Lower leg skin (tissue), 4 donors: ENCODE measurements at regions of chr7 and their contacts with region 1.

Region 1: DNA sequence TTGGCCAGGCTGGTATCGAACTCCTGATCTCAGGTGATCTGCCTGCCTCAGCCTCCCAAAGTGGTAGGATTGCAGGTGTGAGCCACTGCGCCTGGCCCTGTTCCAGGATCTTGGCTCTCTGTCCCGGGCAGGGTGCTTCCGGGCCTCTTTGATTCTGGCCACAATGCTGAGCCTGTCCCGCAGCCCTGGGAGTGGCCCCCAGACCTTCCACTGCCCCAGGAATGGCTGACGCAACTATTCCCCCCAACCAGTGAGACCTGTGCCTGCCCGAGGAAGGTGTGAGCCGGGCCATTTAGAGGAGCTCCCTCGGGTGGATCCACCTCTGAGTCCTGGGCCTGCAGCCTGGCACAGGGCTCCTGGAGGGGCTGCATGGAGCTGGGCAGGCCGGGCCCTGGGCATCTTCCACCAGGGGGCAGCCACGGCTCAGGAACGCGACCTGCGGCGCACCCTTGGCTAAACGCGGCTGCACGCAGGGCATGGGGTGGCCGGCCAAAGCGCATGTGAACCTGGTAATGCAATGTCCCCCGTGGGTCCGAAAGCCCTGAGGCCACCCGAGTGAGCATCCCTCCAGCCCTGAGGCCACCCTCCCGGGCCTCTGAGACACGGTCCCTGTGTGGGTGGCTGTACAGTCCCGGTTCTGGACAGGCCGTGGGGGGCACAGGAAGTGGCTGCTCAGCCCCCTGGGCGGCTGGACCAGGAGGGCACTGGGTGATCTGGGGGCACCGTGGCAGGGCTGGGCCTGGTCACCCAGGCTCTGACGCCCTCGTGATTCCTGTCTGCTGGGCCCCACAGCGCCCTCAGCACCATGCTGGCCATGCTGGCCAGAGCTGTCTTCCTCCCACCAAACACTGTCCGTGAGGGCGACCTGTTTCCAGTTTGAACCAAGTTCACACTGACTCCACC is 24.8 kb downstream of the GRIFIN start:
- DNase-seq: peak in 1 of 2 donors; percentile 95
- H3K4me3 ChIP-seq: no peak overlapping the region
- CTCF ChIP-seq: peak in 1 of 3 donors; percentile 54
- POLR2A ChIP-seq: no peak

Region 2: GRCh38 chr7:2325162-2325561 is 126.3 kb before region 1 on chr7:
- intact Hi-C with region 1: no loop called
- DNase-seq: no peak
- H3K4me3 ChIP-seq: no peak overlapping the region
- CTCF ChIP-seq: no peak
- POLR2A ChIP-seq: no peak

Region 3: DNA sequence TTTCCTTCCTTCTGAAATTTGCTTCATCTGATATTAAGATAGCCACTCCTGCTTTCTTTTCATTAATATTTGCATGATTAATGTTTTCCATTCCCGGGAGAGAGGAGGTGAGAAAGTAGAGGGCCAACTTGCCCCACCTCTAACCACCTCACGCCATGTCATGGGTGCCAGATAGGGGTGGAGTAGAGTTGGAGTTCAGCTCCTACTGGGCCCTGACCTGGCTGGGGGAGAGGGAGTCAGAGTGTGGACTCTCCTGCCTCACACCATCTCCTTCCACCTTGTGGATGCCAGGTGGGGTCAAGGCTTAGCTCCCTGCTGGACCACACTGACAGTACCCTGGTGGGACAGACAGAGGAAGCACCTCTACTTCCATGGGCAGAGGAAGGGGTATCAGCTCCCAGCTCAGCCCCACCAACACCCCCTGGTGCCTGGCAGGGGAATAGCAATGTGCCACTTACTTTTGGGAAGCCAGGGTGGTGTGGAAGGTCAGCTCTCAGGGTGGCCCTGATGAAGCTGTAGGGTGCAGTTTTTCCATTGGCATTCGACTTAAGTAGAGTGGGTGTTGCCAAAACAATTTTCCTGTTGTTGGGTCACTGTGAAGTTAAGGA is 20.1 kb before region 1 on chr7:
- intact Hi-C with region 1: no loop called
- DNase-seq: no peak
- H3K4me3 ChIP-seq: no peak overlapping the region
- CTCF ChIP-seq: no peak
- POLR2A ChIP-seq: no peak

Region 4: DNA sequence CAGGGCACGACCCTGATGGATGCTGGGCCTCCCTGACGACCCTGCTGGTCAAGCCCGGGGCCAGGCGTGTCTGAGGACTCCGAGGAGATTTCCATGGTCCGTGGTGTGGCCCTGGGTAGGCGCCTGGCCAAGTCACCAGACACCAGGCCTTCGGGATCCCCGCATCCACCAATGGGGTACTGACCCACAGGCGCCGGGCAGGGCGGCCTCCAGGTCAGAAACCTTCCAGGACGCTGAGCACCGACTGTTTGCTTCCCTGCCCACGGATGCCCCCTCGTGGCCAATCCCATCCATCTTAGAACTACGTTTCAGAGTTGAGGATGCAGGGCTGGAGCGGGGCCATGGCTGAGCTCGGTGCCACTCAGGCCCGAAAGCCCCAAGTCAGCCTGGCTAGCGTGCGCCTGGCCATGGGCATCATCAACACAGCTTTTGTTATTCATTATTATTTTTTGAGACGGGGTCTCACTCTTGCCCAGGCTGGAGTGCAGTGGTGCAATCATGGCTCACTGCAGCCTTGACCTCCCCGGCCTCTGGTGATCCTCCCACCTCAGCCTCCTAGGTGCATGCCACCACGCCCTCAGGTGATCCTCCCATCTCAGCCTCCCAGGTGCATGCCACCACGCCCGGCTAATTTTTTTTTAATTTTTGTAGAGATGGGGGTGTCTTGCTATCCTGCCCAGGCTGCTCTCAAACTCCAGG is 229.5 kb after region 1 on chr7:
- intact Hi-C with region 1: loop called (anchors 10 kb)
- DNase-seq: peak; percentile 70 to 95
- H3K4me3 ChIP-seq: no peak overlapping the region
- CTCF ChIP-seq: no peak
- POLR2A ChIP-seq: no peak